Activated CD4-positive, alpha-beta T cell treated with anti-CD3 and anti-CD28 coated beads, Interleukin-2, amount 10 ng/mL, durations not matched to agents 24 days and 14 days (primary cell): ENCODE measurements at regions of chr17 and their contacts with region 1.

Region 1: GRCh38 chr17:32523017-32523680 is 36.4 kb downstream of the CDK5R1 start:
- DNase-seq: peak; percentile 85
- H3K4me3 Mint-ChIP-seq: peak overlapping the region; percentile 36
- H3K27ac Mint-ChIP-seq: peak overlapping the region; percentile 94
- H3K4me1 Mint-ChIP-seq: peaks cover 50% of the 10 kb centered on the region
- H3K27me3 Mint-ChIP-seq: no peaks in the 10 kb centered on the region

Region 2: GRCh38 chr17:32461853-32462617 is 61.1 kb before region 1 on chr17:
- intact Hi-C with region 1: no loop called
- DNase-seq: peak; percentile 88
- H3K4me3 Mint-ChIP-seq: no peak overlapping the region
- H3K27ac Mint-ChIP-seq: no peak overlapping the region
- H3K4me1 Mint-ChIP-seq: peaks cover 29% of the 10 kb centered on the region
- H3K27me3 Mint-ChIP-seq: no peaks in the 10 kb centered on the region

Region 3: GRCh38 chr17:32491371-32492263 is 31.5 kb before region 1 on chr17:
- intact Hi-C with region 1: loop called (anchors 1 kb)
- DNase-seq: peak; percentile 74
- H3K4me3 Mint-ChIP-seq: peak overlapping the region; percentile 51
- H3K27ac Mint-ChIP-seq: peak overlapping the region; percentile 1
- H3K4me1 Mint-ChIP-seq: peaks cover 44% of the 10 kb centered on the region
- H3K27me3 Mint-ChIP-seq: no peaks in the 10 kb centered on the region

Region 4: DNA sequence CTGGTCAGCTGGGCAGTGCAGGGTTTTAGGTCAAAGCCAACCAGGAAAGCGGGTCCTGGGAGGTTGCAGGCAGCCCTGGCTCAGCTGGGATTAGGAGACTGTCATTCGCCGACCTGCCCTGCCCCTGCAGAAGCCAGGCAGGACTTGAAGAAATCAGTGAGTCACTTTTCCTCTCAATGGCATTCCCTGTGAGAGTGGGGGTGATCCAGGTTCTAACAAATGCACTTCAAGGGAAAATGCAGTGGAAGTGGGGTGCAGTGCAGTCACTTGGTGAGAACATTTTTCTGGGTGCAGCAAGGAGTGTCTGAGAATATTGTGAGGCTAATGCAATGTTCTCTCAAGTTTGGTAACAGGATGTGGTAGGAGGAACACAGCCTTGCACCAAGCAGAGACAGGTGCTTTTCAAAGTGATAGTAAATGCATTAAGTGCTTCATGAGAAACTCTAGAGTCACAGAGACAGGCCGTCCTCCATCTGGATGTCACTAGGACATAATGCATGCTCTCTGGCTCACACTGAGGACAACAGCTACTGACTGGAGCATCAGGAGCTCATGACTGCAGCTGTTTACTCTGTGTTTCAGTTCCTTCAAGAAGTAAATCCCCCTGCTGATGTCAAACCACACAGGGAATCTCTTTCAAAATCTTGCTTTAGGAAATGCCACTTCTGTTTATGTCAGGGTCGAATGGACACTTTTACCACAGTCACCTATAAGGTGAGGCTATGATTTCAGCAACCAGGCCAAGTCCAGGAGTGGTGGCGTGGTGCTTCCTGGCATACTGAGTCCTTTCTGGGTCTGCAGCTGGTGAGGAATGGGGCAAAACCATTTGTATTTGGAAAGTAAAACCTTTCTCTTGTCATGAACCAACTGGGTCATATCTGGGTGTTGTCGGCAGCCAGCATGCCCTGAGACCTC is 19.6 kb before region 1 on chr17:
- intact Hi-C with region 1: loop called (anchors 1 kb)
- DNase-seq: peak; percentile 88
- H3K4me3 Mint-ChIP-seq: peak overlapping the region; percentile 72
- H3K27ac Mint-ChIP-seq: peak overlapping the region; percentile 95
- H3K4me1 Mint-ChIP-seq: peaks cover 36% of the 10 kb centered on the region
- H3K27me3 Mint-ChIP-seq: no peaks in the 10 kb centered on the region

Region 5: DNA sequence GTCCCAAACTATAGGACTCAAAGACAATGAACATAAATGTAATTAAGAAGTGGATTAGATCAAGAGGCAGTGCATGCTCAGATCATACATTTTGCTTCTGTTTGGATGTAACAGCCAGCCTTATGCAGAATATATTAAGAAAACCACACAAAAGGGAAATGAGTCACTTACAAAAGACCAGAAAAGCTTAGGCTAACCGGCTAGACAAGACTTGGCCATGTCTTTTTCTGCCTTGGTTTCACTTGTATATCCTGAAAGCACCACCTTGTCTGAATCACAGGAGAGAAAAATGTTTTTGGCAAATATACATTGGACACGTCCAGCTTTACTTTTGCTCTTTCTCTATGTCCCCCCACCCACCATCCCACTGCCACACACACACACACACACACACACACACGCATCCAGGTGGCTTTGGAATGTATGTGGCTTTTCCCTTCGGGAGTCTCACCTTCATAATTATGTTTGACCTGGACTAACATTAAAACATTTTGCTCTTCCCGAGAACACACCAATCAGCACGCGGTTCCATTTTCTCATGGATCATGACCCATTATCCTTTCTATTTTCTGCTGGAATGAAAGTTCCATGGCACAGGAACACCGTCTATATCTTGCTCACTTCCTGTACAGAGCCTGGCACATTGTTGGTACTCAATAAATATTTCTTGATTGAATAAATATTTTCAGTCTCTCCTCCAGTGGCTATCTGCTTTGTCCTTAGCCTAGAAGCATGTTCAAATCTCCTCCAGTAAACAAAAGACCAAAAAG is 28.2 kb after region 1 on chr17:
- intact Hi-C with region 1: loop called (anchors 1 kb)
- DNase-seq: peak; percentile 76
- H3K4me3 Mint-ChIP-seq: peak overlapping the region; percentile 18
- H3K27ac Mint-ChIP-seq: peak overlapping the region; percentile 68
- H3K4me1 Mint-ChIP-seq: peaks cover 43% of the 10 kb centered on the region
- H3K27me3 Mint-ChIP-seq: no peaks in the 10 kb centered on the region

Region 6: GRCh38 chr17:32563583-32563982 is 40.4 kb after region 1 on chr17:
- intact Hi-C with region 1: no loop called
- DNase-seq: no peak
- H3K4me3 Mint-ChIP-seq: no peak overlapping the region
- H3K27ac Mint-ChIP-seq: no peak overlapping the region
- H3K4me1 Mint-ChIP-seq: peaks cover 20% of the 10 kb centered on the region
- H3K27me3 Mint-ChIP-seq: no peaks in the 10 kb centered on the region

Region 7: GRCh38 chr17:32772453-32773025 is 249.4 kb after region 1 on chr17:
- intact Hi-C with region 1: no loop called
- DNase-seq: no peak
- H3K4me3 Mint-ChIP-seq: no peak overlapping the region
- H3K27ac Mint-ChIP-seq: no peak overlapping the region
- H3K4me1 Mint-ChIP-seq: no peaks in the 10 kb centered on the region
- H3K27me3 Mint-ChIP-seq: peaks cover 3% of the 10 kb centered on the region